Activated CD4-positive, alpha-beta T cell treated with anti-CD3 and anti-CD28 coated beads for 36 hours (primary cell): ENCODE measurements at regions of chr4 and their contacts with region 1.

Region 1: GRCh38 chr4:122922877-122923511 is 597 bp upstream of the NUDT6 start:
- DNase-seq: peak; percentile 93
- ATAC-seq: peak; percentile 98
- H3K4me3 Mint-ChIP-seq: no peak overlapping the region
- H3K27ac Mint-ChIP-seq: peak overlapping the region; percentile 87
- H3K4me1 Mint-ChIP-seq: peaks cover 9% of the 10 kb centered on the region
- H3K27me3 Mint-ChIP-seq: no peaks in the 10 kb centered on the region

Region 2: DNA sequence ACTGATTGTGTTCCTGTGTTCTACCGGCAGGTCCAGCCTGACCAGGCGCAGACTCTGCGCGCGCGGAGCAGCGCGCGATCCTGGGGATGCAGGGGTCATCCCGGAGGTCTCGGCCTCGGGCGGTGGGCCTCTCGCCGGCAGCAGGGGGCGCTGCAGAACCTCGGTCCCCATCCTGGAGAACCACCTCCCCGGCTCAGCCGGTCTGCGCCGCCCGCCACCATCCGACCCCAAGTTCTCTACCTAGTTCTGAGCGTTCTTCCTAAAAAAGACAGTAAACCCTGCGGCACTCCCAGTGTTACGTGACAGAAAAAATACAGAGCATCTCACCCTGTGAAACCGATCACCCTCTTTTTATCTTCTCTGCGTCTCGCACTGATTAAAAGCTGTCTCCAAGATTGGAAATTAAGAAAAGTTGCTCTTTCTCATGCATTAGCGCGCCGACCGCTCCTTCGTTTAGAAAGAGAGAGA is 972.7 kb before region 1 on chr4:
- CTCF ChIA-PET with region 1: no interaction called
- POLR2A ChIA-PET with region 1: no interaction called
- intact Hi-C with region 1: loop called in 1 of 2 experiments (anchors 5 kb)
- DNase-seq: peak; percentile 94
- ATAC-seq: peak; percentile 87
- H3K4me3 Mint-ChIP-seq: peak overlapping the region; percentile 77
- H3K27ac Mint-ChIP-seq: no peak overlapping the region
- H3K4me1 Mint-ChIP-seq: peaks cover 4% of the 10 kb centered on the region
- H3K27me3 Mint-ChIP-seq: peaks cover 44% of the 10 kb centered on the region

Region 3: DNA sequence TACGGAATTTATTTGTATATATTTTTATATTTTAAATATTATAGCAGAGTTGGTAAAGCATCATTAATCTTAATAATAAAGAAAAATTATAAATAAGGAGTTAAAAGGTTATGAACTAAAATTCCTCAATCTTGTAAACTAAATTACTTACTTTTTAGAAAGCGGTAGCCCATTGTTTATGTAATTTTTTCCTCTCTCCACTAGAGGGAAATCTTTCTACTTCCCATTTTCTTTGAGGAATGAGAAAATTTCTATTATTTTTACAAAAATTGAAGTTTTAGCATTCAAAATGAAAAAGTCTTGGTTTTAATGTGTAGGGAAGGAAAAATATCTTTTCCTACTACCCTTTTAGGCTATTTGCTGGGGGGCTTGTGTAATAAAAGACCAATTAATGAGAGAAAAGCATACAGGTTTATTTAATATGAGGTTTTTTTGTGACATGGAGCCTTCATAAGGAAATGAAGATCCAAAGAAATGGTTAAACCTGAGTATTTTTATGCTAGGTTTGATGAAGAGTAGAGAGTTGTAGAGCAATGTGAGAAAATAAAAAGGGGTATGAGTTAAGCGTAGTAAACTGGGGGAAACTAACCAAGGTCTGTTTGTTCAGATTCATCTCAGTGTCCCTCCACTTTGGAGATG is 612.9 kb before region 1 on chr4:
- CTCF ChIA-PET with region 1: no interaction called
- POLR2A ChIA-PET with region 1: no interaction called
- intact Hi-C with region 1: loop called in 1 of 2 experiments (anchors 5 kb)
- DNase-seq: no peak
- ATAC-seq: no peak
- H3K4me3 Mint-ChIP-seq: no peak overlapping the region
- H3K27ac Mint-ChIP-seq: peak overlapping the region; percentile 51
- H3K4me1 Mint-ChIP-seq: peaks cover 2% of the 10 kb centered on the region
- H3K27me3 Mint-ChIP-seq: no peaks in the 10 kb centered on the region

Region 4: DNA sequence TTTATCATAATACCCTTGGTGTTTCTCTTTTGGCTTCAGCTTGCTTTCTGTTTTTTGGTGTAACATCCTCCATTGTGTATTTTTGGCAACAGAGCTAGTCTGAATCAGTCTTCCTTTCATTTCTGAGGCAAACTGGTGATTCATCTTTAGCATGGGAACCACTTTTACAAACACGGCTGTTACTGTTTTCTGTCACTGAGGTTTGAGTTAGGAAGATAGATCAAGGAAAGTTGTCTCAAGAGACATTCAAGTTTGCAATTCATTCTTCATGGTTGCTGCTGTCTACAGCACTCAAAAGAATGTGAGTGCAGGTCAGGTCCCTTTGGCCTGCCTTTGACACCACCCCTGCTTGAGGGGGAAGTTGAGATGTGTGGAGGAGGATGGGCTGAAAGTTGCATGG is 338.5 kb before region 1 on chr4:
- CTCF ChIA-PET with region 1: interaction called, 7 read pairs
- POLR2A ChIA-PET with region 1: no interaction called
- intact Hi-C with region 1: loop called in 1 of 2 experiments (anchors 2 kb)
- DNase-seq: peak; percentile 33
- ATAC-seq: peak; percentile 93
- H3K4me3 Mint-ChIP-seq: peak overlapping the region; percentile 44
- H3K27ac Mint-ChIP-seq: peak overlapping the region; percentile 92
- H3K4me1 Mint-ChIP-seq: peaks cover 57% of the 10 kb centered on the region
- H3K27me3 Mint-ChIP-seq: no peaks in the 10 kb centered on the region

Region 5: GRCh38 chr4:122758033-122758432 is 165.0 kb before region 1 on chr4:
- CTCF ChIA-PET with region 1: interaction called, 26 read pairs
- POLR2A ChIA-PET with region 1: no interaction called
- intact Hi-C with region 1: loop called in 1 of 2 experiments (anchors 2 kb)
- DNase-seq: no peak
- ATAC-seq: peak; percentile 33
- H3K4me3 Mint-ChIP-seq: no peak overlapping the region
- H3K27ac Mint-ChIP-seq: no peak overlapping the region
- H3K4me1 Mint-ChIP-seq: peaks cover 16% of the 10 kb centered on the region
- H3K27me3 Mint-ChIP-seq: peaks cover 12% of the 10 kb centered on the region